Cardiac septum (tissue), 1 donor: ENCODE measurements at regions of chr6 and their contacts with region 1.

Region 1: DNA sequence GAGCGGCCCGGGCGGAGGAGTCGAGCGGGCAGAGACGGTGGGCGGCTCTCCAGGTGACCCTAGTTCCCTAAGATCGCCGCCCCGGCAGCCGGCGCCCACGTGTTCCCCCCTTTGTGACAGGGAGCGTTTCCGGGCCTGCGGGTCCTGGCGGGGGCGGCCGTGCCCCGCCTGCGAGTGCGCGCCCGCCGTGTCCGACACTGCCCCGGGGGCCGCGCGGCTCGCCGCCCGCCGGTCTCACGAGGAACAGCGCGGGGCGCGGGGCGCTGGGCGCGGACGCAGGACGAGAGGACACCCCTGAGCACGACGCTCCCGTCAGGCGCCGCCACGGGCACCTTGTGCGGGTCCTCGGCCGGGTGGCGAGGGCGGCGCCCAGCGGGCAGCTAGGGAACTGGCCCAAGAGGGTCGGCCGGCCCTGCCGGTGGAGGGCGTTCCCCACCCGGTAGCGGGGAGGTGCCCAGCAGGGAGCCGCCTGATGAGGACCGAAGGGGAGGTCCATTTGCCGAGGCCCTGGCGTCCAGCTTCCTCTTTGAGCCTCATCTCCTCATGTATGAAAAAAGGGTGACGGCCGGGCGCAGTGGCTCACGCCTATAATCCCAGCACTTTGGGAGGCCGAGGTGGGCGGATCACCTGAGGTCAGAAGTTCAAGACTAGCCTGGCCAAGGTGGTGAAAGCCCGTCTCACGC is at the start of gene VARS1:
- DNase-seq: peak; percentile 98
- total RNA-seq, gene VARS1: 35.0 TPM

Region 2: DNA sequence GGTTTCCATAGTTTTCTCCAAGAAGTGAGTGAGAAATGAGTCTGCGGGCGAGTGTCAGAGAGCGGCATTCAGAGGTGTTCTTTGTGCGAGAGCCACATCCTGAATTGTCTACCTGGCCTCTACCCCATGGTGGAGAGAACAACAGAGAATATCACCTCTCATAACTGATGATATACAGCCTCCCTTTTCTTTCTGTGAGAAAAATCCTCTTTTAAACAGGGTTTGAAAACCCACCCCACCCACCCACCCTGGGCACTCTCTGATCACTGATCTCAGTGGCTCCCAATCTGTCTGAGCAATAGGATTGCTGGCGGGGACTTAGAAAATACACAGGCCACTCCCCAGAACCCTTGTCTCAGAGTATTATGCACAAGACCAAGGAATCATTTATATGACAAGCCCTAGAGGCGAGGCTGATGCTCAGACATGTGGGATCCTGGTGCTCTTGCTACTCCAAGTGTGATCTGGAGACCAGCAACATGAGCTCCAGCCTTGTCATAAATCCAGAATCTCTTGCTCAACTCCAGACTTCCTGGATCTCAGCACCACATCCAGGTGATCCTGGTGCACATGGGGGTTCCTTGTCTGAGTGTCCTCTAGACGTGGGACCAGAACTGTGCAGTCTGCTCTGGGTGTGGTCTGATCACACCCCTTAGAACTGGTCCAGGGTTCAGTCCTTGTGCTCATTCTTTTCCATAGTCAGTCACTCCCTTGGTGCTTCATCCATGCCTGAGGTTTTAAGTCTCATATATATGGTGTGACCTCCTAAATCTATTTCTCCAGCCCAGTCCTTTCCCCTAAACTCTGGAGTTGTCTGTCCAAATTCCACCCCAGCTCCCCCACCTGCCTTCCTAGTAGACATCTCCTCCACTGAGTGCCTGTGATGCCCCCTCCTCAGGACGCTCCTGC is 444.1 kb before region 1 on chr6:
- intact Hi-C with region 1: no loop called
- DNase-seq: no peak

Region 3: DNA sequence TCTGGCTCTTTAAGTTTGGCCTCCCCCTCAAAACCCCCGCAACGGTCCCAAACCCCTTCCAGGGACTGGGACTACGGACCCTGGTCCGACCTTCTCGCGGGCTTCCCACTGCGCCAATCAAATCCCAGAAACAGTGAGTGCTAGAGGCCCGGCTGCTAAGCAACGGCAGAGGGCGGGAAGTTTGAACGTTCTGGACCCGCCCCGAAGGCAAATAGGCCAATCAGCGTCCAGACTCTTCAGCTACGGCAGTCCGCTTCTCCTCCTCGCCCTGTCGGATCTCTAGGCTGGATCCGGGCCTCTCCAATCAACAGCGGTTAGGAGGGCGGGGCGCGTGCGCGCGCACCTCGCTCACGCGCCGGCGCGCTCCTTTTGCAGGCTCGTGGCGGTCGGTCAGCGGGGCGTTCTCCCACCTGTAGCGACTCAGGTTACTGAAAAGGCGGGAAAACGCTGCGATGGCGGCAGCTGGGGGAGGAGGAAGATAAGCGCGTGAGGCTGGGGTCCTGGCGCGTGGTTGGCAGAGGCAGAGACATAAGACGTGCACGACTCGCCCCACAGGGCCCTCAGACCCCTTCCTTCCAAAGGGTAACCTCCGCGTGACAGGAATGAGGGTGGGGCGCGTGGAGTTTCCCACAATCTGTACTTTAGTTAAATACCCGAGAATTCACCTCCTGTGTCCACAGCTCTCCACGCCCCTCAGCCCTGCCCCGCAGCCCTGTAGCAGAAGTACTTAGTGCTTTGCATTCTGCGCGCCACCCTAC is 55.9 kb before region 1 on chr6 and contains the start of gene MSH5:
- intact Hi-C with region 1: loop called (anchors 5 kb)
- DNase-seq: peak; percentile 99
- total RNA-seq, gene MSH5: 1.7 TPM

Region 4: GRCh38 chr6:31815025-31815838 is 19.5 kb after region 1 on chr6 and contains the starts of genes HSPA1A and HSPA1L:
- intact Hi-C with region 1: no loop called
- DNase-seq: peak; percentile 98
- total RNA-seq, gene HSPA1A: 296 TPM
- total RNA-seq, gene HSPA1L: 2.4 TPM